ENCODE measurements at regions of chr10 and their contacts with region 1.

Region 1: GRCh38 chr10:113802997-113803396 is 50.9 kb downstream of the DCLRE1A start:
- DNase-seq: no peak
- H3K4me3 Mint-ChIP-seq: no peak overlapping the region
- H3K27ac Mint-ChIP-seq: no peak overlapping the region
- H3K4me1 Mint-ChIP-seq: no peaks in the 10 kb centered on the region
- H3K27me3 Mint-ChIP-seq: peaks cover 18% of the 10 kb centered on the region
- CTCF ChIP-seq: no peak

Region 2: GRCh38 chr10:113704637-113705343 is 98.2 kb before region 1 on chr10:
- CTCF ChIA-PET with region 1: interaction called, 5 read pairs
- POLR2A ChIA-PET with region 1: no interaction called
- intact Hi-C with region 1: loop called (anchors 1 kb)
- DNase-seq: peak; percentile 59
- H3K4me3 Mint-ChIP-seq: no peak overlapping the region
- H3K27ac Mint-ChIP-seq: no peak overlapping the region
- H3K4me1 Mint-ChIP-seq: peaks cover 5% of the 10 kb centered on the region
- H3K27me3 Mint-ChIP-seq: no peaks in the 10 kb centered on the region
- CTCF ChIP-seq: peak; percentile 49

Region 3: GRCh38 chr10:113897693-113898618 is 95.0 kb after region 1 on chr10:
- CTCF ChIA-PET with region 1: no interaction called
- POLR2A ChIA-PET with region 1: no interaction called
- intact Hi-C with region 1: loop called (anchors 5 kb)
- DNase-seq: peak; percentile 58
- H3K4me3 Mint-ChIP-seq: no peak overlapping the region
- H3K27ac Mint-ChIP-seq: peak overlapping the region; percentile 61
- H3K4me1 Mint-ChIP-seq: peaks cover 12% of the 10 kb centered on the region
- H3K27me3 Mint-ChIP-seq: no peaks in the 10 kb centered on the region
- CTCF ChIP-seq: no peak

Region 4: DNA sequence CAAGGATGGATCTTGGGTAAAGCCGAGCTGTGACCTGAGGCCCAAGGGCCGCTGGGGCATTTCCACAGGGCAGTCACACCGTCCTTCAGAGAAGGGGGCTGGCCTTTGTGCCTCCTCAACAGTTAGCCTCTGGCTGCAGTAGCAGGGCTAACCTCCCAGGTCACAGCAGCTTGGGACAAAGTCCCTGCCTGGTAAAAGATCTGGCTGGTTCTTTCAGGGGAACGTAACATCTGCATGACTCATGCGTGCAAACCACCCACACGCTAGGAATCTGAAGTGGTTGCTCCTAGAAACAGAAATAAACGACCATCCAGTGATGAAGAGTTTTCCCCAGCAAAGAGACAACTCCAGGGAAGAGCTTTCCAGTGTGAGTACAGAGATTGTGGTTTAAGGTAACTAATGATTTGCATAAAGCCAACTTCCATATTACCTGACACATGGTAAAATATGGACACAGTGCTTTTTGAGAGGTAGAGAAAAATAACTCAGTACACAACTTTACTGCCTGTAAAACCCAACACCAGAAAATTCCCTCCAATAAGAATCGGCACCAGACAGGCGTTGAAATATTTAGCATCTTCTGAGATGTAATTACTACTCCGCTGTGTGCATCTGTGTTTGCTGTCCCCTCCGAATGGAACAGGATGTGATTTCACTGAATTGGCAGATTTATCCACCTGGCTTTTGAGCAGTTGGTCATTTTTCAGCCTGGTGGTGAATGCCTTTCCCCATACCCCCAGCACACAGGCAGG is 155.8 kb after region 1 on chr10:
- CTCF ChIA-PET with region 1: interaction called, 3 read pairs
- POLR2A ChIA-PET with region 1: no interaction called
- intact Hi-C with region 1: loop called (anchors 5 kb)
- DNase-seq: peak; percentile 75
- H3K4me3 Mint-ChIP-seq: no peak overlapping the region
- H3K27ac Mint-ChIP-seq: peak overlapping the region; percentile 4
- H3K4me1 Mint-ChIP-seq: peaks cover 38% of the 10 kb centered on the region
- H3K27me3 Mint-ChIP-seq: no peaks in the 10 kb centered on the region
- CTCF ChIP-seq: no peak

Region 5: DNA sequence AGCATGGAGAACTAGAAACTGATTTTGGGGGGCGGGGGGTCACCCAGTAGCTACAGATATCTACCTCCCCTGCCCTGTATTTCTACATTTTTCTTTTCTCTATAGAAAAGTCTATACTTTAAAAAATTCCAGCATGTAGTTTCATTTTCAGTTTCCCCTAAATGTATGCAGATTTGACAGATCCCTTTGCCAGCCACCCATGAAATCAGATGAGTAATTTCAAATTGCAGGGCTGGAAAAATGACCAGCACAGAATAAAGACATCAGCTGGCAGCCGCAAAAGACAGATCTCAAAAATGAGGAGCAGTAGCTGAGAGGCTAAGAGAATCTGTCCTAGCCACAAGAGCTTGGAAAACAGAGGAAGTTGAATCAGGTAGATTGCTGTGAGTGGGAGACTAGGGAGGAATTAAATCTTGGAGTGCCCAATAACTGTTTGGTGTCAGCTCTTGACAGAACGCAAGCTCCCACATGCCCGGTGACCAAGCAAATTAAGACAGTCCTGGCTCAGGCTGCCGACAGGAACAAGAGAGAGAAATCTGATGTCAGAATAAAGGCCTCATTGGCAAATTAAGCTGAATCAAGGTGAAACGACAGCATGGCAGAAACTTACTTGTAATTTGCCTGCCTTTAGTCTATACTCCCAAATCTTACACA is 265.2 kb after region 1 on chr10:
- CTCF ChIA-PET with region 1: interaction called, 10 read pairs
- POLR2A ChIA-PET with region 1: no interaction called
- intact Hi-C with region 1: no loop called
- DNase-seq: peak; percentile 81
- H3K4me3 Mint-ChIP-seq: peak overlapping the region; percentile 61
- H3K27ac Mint-ChIP-seq: peak overlapping the region; percentile 36
- H3K4me1 Mint-ChIP-seq: peaks cover 14% of the 10 kb centered on the region
- H3K27me3 Mint-ChIP-seq: no peaks in the 10 kb centered on the region
- CTCF ChIP-seq: no peak

Region 6: GRCh38 chr10:114103284-114103683 is 300.3 kb after region 1 on chr10:
- CTCF ChIA-PET with region 1: interaction called, 149 read pairs
- POLR2A ChIA-PET with region 1: interaction called, 3 read pairs
- intact Hi-C with region 1: loop called (anchors 1 kb)
- DNase-seq: peak; percentile 66
- H3K4me3 Mint-ChIP-seq: no peak overlapping the region
- H3K27ac Mint-ChIP-seq: no peak overlapping the region
- H3K4me1 Mint-ChIP-seq: no peaks in the 10 kb centered on the region
- H3K27me3 Mint-ChIP-seq: no peaks in the 10 kb centered on the region
- CTCF ChIP-seq: peak; percentile 46

Region 7: DNA sequence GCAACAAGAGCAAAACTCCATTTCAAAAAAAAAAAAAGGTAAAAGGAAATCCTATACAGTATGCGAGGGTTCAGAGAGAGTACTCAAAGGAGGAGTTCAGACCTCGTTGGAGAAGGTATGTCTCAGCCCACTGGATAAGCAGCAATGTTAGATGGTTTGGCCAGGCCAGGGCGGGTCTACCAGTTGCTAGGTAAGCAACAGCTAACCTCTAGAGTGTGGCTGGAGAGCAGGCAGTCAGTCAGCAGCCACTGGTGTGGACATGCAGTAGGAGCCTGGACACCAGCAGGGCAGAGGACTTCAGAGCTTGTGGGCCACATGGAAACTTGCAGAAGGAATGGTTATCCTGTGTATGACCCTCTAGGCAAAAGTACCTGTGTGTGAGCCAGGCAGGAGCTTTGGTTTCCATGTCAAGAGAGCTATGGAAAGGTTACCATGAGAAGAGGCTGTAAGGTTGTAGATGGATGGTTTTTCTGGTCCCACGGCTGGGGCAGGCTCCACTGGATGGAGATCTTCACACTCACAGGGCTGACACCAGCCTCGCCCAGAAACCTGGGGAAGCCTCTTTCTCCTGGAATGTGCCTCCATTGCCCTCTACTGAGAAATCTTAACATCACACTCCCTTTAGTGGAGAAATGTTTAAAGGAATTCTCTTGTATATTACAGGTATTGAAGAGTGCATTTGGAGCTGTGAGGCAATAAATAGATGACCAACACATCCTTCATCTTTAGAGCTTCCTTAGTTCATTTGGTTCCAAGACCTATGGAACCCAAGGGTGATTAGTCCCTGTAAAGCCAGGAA is 307.4 kb after region 1 on chr10:
- CTCF ChIA-PET with region 1: interaction called, 149 read pairs
- POLR2A ChIA-PET with region 1: no interaction called
- intact Hi-C with region 1: no loop called
- DNase-seq: peak; percentile 50
- H3K4me3 Mint-ChIP-seq: no peak overlapping the region
- H3K27ac Mint-ChIP-seq: no peak overlapping the region
- H3K4me1 Mint-ChIP-seq: no peaks in the 10 kb centered on the region
- H3K27me3 Mint-ChIP-seq: no peaks in the 10 kb centered on the region
- CTCF ChIP-seq: peak; percentile 45